ENCODE measurements at regions of chr14 and their contacts with region 1.

Region 1: GRCh38 chr14:35404449-35405303 is at the start of gene NFKBIA:
- DNase-seq: peak; percentile 92 to 94
- ATAC-seq: peak; percentile 67 to 80 (median 73)
- H3K4me3 ChIP-seq: peak within 1 kb of the TSS; percentile 64 to 93 (median 80)
- H3K27ac ChIP-seq: peak within 1 kb of the TSS; percentile 99 to 100 (median 100)
- H3K4me1 ChIP-seq: peaks cover 5 to 86% (median 61%) of the 10 kb centered on the region in 9 donors
- H3K27me3 ChIP-seq: no peaks in the 10 kb centered on the region
- CTCF ChIP-seq: peak in 7 of 9 donors; percentile 15 to 64 (median 39)
- total RNA-seq, gene NFKBIA: 41.0 to 98.5 (median 58.7) TPM

Region 2: GRCh38 chr14:35121887-35122695 is 282.6 kb before region 1 on chr14 and contains the starts of genes PPP2R3C and PRORP:
- intact Hi-C with region 1: loop called in 1 of 10 experiments (anchors 5 kb)
- DNase-seq: peak; percentile 86 to 93
- ATAC-seq: peak; percentile 93 to 97 (median 96)
- H3K4me3 ChIP-seq: peak within 1 kb of the TSS; percentile 33 to 90 (median 70)
- H3K27ac ChIP-seq: peak within 1 kb of the TSS; percentile 92 to 98 (median 95)
- H3K4me1 ChIP-seq: peaks cover 0 to 73% (median 34%) of the 10 kb centered on the region in 9 donors
- H3K27me3 ChIP-seq: no peaks in the 10 kb centered on the region
- CTCF ChIP-seq: no peak
- total RNA-seq, gene PPP2R3C: 25.8 to 36.3 (median 27.9) TPM
- total RNA-seq, gene PRORP: 17.6 to 25.4 (median 20.9) TPM

Region 3: DNA sequence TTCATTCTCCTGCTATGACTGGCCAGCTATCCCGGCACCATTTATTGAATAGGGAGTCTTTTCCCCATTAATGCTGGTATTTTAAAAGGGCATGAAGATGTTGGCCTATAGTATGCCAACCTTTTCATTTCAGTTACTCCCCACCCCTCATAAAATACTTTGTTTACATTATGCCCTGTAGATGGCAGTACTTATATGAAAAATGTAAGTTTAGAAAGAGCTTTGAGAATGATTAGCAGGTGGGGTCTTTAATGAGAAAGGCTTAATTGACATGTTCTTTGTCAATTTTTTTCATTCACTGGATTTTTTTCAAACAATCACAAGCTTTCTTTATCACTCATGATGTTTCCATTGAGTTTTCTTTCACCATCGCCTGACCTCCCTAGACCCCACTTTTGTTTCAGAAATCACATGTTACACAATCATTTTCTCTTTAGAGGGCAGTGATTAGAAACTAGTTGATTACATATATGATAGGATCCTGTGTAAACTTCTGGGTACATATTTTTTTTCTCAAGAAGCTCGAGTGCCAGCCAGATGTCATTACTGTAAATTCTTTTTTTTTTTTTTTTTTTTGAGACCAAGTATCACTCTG is 175.1 kb before region 1 on chr14:
- intact Hi-C with region 1: loop called in 2 of 10 experiments (anchors 2 to 5 kb)
- DNase-seq: no peak
- ATAC-seq: no peak
- H3K4me3 ChIP-seq: no peak overlapping the region
- H3K27ac ChIP-seq: no peak overlapping the region
- H3K4me1 ChIP-seq: peaks cover 0 to 31% (median 4%) of the 10 kb centered on the region in 9 donors
- H3K27me3 ChIP-seq: no peaks in the 10 kb centered on the region
- CTCF ChIP-seq: peak in 8 of 9 donors; percentile 22 to 51 (median 40)

Region 4: DNA sequence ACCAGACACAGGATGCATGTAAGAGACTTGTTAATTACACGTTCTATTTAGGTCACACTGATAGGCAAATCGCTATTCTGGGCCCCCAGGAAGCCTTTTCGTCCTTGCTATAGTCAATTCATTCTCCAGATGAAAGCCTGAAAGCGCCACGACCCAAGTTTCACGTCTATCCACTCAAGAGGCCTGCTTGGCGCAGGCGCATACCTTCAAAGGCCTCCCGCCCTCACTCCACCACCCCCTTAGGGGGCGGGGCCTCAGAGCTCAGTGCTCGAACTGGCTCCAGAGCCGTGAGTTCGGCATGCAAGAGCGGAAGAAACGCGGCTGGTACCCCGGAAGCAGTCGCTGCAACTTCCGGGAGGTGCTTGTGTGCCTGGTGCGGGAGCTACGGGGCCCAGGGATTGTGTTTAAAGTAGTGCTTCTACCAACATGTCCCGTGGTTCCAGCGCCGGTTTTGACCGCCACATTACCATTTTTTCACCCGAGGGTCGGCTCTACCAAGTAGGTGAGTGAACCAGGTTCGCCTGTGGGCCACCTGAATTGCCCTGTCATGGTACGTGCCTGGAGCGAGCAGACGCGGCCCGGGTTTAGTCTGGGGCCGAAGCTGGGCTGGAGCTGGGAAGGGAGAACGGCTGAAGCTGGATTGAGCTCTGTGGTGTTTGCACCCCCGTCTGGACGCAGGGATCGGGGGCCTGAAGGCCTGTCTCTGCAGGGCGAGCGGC is 112.5 kb before region 1 on chr14 and contains the start of gene PSMA6:
- intact Hi-C with region 1: loop called in 8 of 10 experiments (anchors 1 to 5 kb)
- DNase-seq: peak; percentile 98
- ATAC-seq: peak; percentile 99 to 100 (median 100)
- H3K4me3 ChIP-seq: peak within 1 kb of the TSS; percentile 59 to 95 (median 86)
- H3K27ac ChIP-seq: peak within 1 kb of the TSS; percentile 77 to 95 (median 92)
- H3K4me1 ChIP-seq: peaks cover 4 to 65% (median 43%) of the 10 kb centered on the region in 9 donors
- H3K27me3 ChIP-seq: no peaks in the 10 kb centered on the region
- CTCF ChIP-seq: no peak
- total RNA-seq, gene PSMA6: 150 to 228 (median 166) TPM

Region 5: DNA sequence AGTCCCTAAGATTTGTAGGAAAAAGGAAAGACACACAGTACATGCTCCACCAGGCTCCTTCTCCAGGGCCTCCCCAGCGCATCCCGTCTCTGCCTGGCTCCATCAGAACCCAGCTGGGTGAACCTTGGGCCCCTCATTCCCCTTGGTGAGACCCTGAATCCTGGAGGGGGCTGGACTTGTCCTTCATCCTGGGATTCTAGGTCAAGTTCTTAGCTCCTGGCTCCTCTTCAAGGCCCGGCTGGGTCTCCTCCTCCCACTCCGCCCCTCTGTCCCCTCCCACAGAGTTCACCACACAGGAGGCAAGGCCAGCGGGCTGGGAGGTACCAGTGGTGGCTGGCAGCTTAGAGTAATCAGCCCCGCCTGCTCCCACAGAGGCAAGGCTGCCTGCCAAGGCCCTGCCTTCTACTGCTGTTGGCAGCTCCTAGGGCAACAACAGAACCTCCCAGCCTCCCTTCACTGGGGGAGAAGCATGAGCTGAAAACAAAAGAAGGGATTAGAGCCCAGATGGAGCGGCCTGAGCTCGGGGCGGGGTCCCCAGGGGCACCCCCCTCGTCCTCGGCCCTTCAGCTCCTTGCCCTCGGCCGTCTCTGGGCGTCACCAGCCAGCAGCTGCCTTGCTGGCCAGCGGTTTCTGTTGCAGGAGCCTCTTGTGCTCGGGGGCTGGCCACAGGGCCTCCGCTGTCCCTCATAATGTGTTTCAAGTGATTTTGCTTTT is 63.1 kb before region 1 on chr14:
- intact Hi-C with region 1: loop called in 9 of 10 experiments (anchors 1 to 10 kb)
- DNase-seq: peak; percentile 95
- ATAC-seq: peak; percentile 85 to 96 (median 90)
- H3K4me3 ChIP-seq: peak overlapping the region in 9 of 10 donors; percentile 1 to 44 (median 38)
- H3K27ac ChIP-seq: peak overlapping the region; percentile 86 to 98 (median 95)
- H3K4me1 ChIP-seq: peaks cover 20 to 78% (median 52%) of the 10 kb centered on the region in 9 donors
- H3K27me3 ChIP-seq: no peaks in the 10 kb centered on the region
- CTCF ChIP-seq: no peak

Region 6: DNA sequence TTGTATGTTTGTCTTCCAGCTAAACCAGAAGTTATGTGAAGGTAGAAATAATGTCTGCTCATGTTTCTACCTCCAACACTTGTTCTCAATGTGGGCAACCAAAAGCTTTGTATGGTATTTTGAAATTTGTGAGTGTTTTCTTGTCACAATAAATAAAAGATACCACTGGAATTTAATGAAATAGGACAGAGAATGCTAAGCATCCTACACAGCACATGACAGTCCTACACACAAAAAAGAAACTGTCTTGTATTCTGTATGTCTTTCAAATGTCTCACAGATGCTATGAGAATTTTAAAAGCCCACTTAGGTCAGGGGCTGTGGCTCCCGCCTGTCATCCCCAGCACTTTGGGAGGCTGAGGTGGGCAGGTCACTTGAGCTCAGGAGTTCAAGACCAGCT is 335.5 kb after region 1 on chr14:
- intact Hi-C with region 1: no loop called
- DNase-seq: no peak
- ATAC-seq: no peak
- H3K4me3 ChIP-seq: no peak overlapping the region
- H3K27ac ChIP-seq: no peak overlapping the region
- H3K4me1 ChIP-seq: no peaks in the 10 kb centered on the region
- H3K27me3 ChIP-seq: no peaks in the 10 kb centered on the region
- CTCF ChIP-seq: no peak